ENCODE measurements at regions of chr5 and their contacts with region 1.

Region 1: GRCh38 chr5:81971712-81972495 is at the start of gene ATG10:
- DNase-seq: peak; percentile 93
- ATAC-seq: peak; percentile 95
- H3K4me3 Mint-ChIP-seq: peak within 1 kb of the TSS; percentile 88
- H3K27ac Mint-ChIP-seq: peak within 1 kb of the TSS; percentile 86
- H3K4me1 Mint-ChIP-seq: peaks cover 20% of the 10 kb centered on the region
- H3K27me3 Mint-ChIP-seq: no peaks in the 10 kb centered on the region
- CTCF ChIP-seq: no peak
- total RNA-seq, gene ATG10: 5.3 and 7.3 TPM in 2 replicates

Region 2: GRCh38 chr5:80407735-80408482 is 1564.0 kb before region 1 on chr5 and contains the start of gene ZFYVE16:
- CTCF ChIA-PET with region 1: no interaction called
- POLR2A ChIA-PET with region 1: no interaction called
- intact Hi-C with region 1: loop called (anchors 5 kb)
- DNase-seq: peak; percentile 95
- ATAC-seq: peak; percentile 84
- H3K4me3 Mint-ChIP-seq: peak within 1 kb of the TSS; percentile 91
- H3K27ac Mint-ChIP-seq: peak within 1 kb of the TSS; percentile 95
- H3K4me1 Mint-ChIP-seq: peaks cover 17% of the 10 kb centered on the region
- H3K27me3 Mint-ChIP-seq: no peaks in the 10 kb centered on the region
- CTCF ChIP-seq: no peak
- total RNA-seq, gene ZFYVE16: 19.8 and 21.1 TPM in 2 replicates

Region 3: DNA sequence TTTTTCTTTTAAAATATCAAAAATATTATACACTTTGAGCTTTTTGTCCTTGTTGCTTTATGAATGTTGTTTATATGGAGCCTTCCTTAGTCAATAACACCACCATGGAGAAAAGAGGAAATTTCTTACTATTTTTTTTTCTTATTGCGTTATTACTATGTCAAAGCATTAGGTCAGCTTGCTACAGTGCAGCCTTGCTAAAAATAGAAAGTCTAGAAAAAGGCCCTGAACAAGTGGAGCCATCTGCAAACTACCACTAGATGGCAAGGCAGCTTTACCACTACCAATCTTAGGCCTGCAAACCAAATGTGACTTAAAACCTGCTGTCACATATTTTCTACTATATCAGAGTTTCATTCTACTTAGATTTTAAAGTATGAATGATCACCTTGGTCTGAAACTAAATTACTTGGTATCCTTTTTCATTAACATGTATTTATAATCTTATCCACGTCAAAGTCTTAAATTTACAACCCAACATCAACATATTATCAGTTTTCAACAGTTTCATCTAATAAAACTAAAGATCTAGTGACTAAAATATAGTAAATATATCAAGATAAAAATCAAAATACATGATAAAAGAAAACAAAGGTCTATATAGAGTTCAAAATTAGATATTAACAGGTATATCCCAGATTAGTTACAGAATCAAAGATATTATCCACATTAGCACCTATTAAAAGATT is 464.9 kb before region 1 on chr5:
- CTCF ChIA-PET with region 1: no interaction called
- POLR2A ChIA-PET with region 1: interaction called, 3 read pairs
- intact Hi-C with region 1: loop called (anchors 2 kb)
- DNase-seq: no peak
- ATAC-seq: peak; percentile 100
- H3K4me3 Mint-ChIP-seq: no peak overlapping the region
- H3K27ac Mint-ChIP-seq: no peak overlapping the region
- H3K4me1 Mint-ChIP-seq: peaks cover 6% of the 10 kb centered on the region
- H3K27me3 Mint-ChIP-seq: no peaks in the 10 kb centered on the region
- CTCF ChIP-seq: no peak

Region 4: GRCh38 chr5:82174128-82174918 is 202.4 kb after region 1 on chr5:
- CTCF ChIA-PET with region 1: no interaction called
- POLR2A ChIA-PET with region 1: no interaction called
- intact Hi-C with region 1: loop called (anchors 1 kb)
- DNase-seq: peak; percentile 46
- ATAC-seq: peak; percentile 89
- H3K4me3 Mint-ChIP-seq: peak overlapping the region; percentile 12
- H3K27ac Mint-ChIP-seq: peak overlapping the region; percentile 69
- H3K4me1 Mint-ChIP-seq: peaks cover 20% of the 10 kb centered on the region
- H3K27me3 Mint-ChIP-seq: no peaks in the 10 kb centered on the region
- CTCF ChIP-seq: no peak

Region 5: GRCh38 chr5:82265047-82265446 is 293.1 kb after region 1 on chr5:
- CTCF ChIA-PET with region 1: no interaction called
- POLR2A ChIA-PET with region 1: no interaction called
- intact Hi-C with region 1: no loop called
- DNase-seq: no peak
- ATAC-seq: no peak
- H3K4me3 Mint-ChIP-seq: no peak overlapping the region
- H3K27ac Mint-ChIP-seq: no peak overlapping the region
- H3K4me1 Mint-ChIP-seq: no peaks in the 10 kb centered on the region
- H3K27me3 Mint-ChIP-seq: no peaks in the 10 kb centered on the region
- CTCF ChIP-seq: no peak

Region 6: DNA sequence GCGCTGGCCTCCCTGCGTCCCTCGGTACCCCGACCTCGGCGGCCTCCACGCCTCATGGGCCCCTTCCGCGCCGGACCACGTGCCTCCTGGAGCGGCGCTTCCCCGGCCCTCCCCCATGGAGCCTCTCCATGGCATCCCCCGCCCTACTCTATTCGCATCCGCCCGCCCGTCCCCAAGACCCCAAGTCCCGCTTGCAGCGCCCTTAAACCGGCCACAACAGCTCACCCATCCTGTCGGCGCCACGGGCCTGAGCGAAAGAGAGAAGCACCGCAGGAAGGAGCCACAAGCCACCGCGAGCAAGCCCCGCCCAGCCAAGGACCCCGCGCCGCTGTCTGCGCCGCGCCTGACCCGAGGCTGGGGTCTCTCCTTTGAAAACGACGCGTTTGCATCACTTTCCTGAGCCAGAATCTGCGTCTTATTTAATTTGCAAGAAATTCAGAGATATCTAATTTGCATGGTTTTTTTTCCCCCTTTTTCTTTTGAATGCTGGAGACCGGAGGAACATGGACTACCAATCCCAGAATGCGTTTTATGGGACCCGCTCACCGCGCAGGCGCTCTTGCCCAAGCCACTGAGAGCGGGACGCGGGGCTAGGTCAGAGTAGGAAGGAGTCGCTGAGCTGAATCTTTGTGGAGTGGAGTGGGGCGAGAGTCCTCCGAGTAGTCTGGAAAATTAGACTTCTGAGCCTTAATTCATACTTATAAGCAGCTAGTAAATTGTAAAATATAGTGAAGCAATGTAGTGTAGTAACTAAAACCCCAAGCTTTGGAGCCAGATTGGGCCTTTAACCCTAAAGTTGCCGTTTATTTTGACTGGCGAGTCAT is 306.4 kb after region 1 on chr5 and contains the start of gene RPS23:
- CTCF ChIA-PET with region 1: no interaction called
- POLR2A ChIA-PET with region 1: interaction called, 5 read pairs
- intact Hi-C with region 1: loop called (anchors 1 kb)
- DNase-seq: peak; percentile 79
- ATAC-seq: peak; percentile 92
- H3K4me3 Mint-ChIP-seq: peak within 1 kb of the TSS; percentile 96
- H3K27ac Mint-ChIP-seq: peak within 1 kb of the TSS; percentile 99
- H3K4me1 Mint-ChIP-seq: peaks cover 44% of the 10 kb centered on the region
- H3K27me3 Mint-ChIP-seq: no peaks in the 10 kb centered on the region
- CTCF ChIP-seq: no peak
- total RNA-seq, gene RPS23: 4,125 and 4,753 TPM in 2 replicates

Measured in activated B cell treated with CpG ODN at 0.5 μM for 24 hours (primary cell).